Transverse colon (tissue), 4 donors: ENCODE measurements at regions of chr5 and their contacts with region 1.

Region 1: GRCh38 chr5:178279725-178280438 is 47.3 kb upstream of the PHYKPL start:
- DNase-seq: peak; percentile 87
- H3K4me3 ChIP-seq: no peak overlapping the region
- H3K27ac ChIP-seq: no peak overlapping the region
- H3K4me1 ChIP-seq: peaks cover 0 to 7% (median 3%) of the 10 kb centered on the region in 4 donors
- H3K27me3 ChIP-seq: peaks cover 21% of the 10 kb centered on the region
- CTCF ChIP-seq: peak; percentile 69 to 90 (median 81)
- EP300 ChIP-seq: no peak
- POLR2A ChIP-seq: no peak

Region 2: GRCh38 chr5:178137991-178138390 is 141.9 kb before region 1 on chr5:
- in situ Hi-C with region 1: no loop called
- intact Hi-C with region 1: no loop called
- DNase-seq: no peak
- H3K4me3 ChIP-seq: no peak overlapping the region
- H3K27ac ChIP-seq: no peak overlapping the region
- H3K4me1 ChIP-seq: no peaks in the 10 kb centered on the region
- H3K27me3 ChIP-seq: no peaks in the 10 kb centered on the region
- CTCF ChIP-seq: no peak
- EP300 ChIP-seq: no peak
- POLR2A ChIP-seq: no peak

Region 3: DNA sequence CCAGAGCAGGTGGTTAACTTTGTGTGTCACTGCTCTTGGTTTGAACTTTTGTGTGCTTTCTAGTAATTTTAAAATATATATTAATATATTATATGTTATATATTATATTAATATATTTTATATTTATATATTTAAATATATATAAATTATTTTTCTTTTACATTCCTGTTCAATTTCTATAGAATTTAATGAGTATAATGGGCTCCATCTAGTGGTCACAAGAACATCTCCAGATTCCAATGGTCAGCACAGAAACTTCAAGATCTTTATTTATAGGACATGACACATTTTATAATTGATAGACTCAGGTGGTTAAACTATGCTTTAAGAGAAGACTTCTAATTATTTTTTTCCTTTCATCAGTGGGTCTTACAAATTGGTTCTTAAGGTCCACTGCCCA is 271.2 kb after region 1 on chr5:
- in situ Hi-C with region 1: loop called (anchors 5 to 25 kb)
- intact Hi-C with region 1: no loop called
- DNase-seq: no peak
- H3K4me3 ChIP-seq: no peak overlapping the region
- H3K27ac ChIP-seq: no peak overlapping the region
- H3K4me1 ChIP-seq: no peaks in the 10 kb centered on the region
- H3K27me3 ChIP-seq: no peaks in the 10 kb centered on the region
- CTCF ChIP-seq: peak; percentile 28 to 49 (median 42)
- EP300 ChIP-seq: no peak
- POLR2A ChIP-seq: no peak

Region 4: DNA sequence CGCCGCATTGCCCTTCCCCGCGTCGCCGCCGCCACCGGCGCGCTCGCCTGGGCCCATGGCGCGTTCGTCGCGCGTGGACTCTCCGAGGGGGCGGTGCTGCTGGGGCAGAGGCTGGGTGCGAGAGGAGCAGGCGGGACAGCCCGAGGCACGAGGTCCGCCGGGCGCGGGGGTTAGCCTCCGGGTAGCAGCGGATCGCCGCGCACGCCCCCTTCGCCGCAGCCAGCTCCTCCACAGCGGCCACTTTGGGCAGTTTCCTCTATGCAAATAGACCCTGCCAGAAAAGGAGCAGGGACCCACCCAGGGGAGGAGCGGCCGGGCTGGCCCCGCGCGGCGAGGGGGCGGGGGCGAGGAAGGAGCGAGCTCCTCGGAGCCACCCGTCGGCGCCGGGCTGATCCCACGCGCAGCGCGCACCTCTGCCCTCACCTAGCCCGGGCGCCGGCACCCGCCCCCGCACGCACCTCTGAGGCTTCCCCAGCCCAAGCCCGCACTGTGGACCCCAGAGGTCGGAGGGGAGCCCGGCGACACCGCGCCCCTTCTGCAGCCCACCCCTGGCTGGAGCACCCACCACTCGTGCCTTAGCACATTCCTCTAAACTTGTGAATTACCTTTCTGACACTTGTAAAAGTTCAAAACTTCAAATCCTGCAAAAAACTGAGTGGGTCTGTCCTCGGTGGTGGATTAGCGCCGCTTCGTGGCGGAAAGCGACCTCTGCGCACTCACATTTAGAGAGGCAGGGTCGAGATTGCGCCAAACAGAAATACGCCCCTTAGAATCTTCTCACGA is 310.4 kb after region 1 on chr5 and contains the start of gene COL23A1:
- in situ Hi-C with region 1: no loop called
- intact Hi-C with region 1: loop called (anchors 5 kb)
- DNase-seq: peak; percentile 22
- H3K4me3 ChIP-seq: peak within 1 kb of the TSS; percentile 7 to 61 (median 35)
- H3K27ac ChIP-seq: peak within 1 kb of the TSS in 1 of 4 donors; percentile 22
- H3K4me1 ChIP-seq: peaks cover 0 to 16% (median 12%) of the 10 kb centered on the region in 4 donors
- H3K27me3 ChIP-seq: peaks cover 52% of the 10 kb centered on the region
- CTCF ChIP-seq: peak; percentile 38 to 52 (median 44)
- EP300 ChIP-seq: no peak
- POLR2A ChIP-seq: no peak
- total RNA-seq, gene COL23A1: 0.14 to 2.2 (median 1.4) TPM in 3 of 4 donors, not detected in the other

Region 5: DNA sequence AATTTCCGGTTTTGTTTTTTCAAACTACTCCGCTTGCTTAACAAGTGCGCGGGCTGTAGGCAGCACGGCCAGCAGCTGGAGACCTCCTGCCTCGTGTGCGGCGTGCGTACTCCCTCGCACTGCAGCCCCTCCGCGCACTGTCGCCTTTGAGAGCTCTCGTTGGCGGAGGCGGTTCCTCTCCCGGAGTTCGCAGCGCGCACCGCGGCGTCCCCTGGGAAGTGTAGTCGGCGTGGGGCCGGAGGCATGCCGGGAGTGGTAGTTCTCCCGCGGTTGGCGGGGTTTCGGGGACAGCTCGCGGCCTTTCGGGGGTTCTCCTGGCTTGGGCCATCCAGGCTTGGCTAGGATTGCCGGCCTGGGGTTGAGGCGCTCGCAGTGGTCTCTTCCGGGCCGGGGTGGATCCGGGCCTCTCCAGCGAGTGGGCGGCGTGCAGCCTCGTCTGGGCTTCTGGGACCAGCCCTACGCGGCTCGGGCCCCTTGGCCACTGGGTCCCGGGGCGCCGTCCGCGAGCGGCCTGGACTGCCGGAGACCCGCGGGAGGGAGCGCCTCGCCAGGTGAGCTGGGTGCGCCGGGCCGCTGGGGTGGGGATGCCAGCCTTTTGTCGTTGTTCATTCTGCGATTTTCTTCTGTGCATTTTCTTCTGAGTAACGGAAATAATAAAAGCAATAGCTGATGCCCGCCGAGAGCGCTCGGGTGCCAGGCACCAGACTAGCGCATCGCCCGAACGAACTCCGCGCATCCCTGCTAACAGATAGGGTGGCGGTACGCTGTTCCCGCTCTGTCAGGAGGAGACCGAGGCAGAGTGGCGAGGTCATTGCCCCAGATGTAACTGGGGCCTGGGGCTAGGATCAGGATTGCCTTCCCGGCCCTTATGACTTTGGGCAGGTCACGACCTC is 780.5 kb after region 1 on chr5 and contains the start of gene ZNF354C:
- in situ Hi-C with region 1: no loop called
- intact Hi-C with region 1: no loop called
- DNase-seq: peak; percentile 86
- H3K4me3 ChIP-seq: peak within 1 kb of the TSS; percentile 38 to 84 (median 70)
- H3K27ac ChIP-seq: peak within 1 kb of the TSS; percentile 51 to 76 (median 72)
- H3K4me1 ChIP-seq: peaks cover 0 to 9% (median 6%) of the 10 kb centered on the region in 4 donors
- H3K27me3 ChIP-seq: no peaks in the 10 kb centered on the region
- CTCF ChIP-seq: no peak
- EP300 ChIP-seq: no peak
- POLR2A ChIP-seq: peak; percentile 24
- total RNA-seq, gene ZNF354C: 0.75 to 7.6 (median 2.9) TPM

Region 6: GRCh38 chr5:179414459-179415261 is 1134.8 kb after region 1 on chr5:
- in situ Hi-C with region 1: no loop called
- intact Hi-C with region 1: no loop called
- DNase-seq: no peak
- H3K4me3 ChIP-seq: no peak overlapping the region
- H3K27ac ChIP-seq: no peak overlapping the region
- H3K4me1 ChIP-seq: no peaks in the 10 kb centered on the region
- H3K27me3 ChIP-seq: no peaks in the 10 kb centered on the region
- CTCF ChIP-seq: no peak
- EP300 ChIP-seq: no peak
- POLR2A ChIP-seq: no peak